CD4-positive, alpha-beta memory T cell (primary cell): ENCODE measurements at regions of chr5 and their contacts with region 1.

Region 1: DNA sequence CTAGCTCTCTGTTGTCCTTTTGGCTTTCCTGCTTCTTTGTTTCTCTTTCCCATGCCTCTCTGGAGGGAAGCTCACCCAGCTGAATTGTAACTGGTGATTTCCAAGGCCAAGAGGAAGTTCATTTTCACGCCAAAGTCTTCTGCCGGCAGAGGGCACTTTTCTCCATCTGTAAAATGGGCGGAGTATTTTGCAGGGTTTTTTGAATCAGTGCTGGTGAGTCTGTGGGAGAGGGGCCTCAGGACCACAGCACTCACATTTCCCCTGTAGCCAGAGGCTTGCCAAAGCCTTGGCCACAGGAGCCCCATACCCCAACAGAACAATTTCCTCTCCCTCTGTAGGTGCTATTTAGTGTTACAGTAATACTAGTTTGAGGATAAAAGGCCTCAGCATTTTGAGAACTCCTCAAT is 42.3 kb upstream of the MATR3 start:
- DNase-seq: peak in 4 of 5 donors; percentile 24 to 38 (median 36)
- H3K4me3 ChIP-seq: no peak overlapping the region
- H3K4me3 Mint-ChIP-seq: no peak overlapping the region
- H3K27ac ChIP-seq: no peak overlapping the region
- H3K27ac Mint-ChIP-seq: no peak overlapping the region
- H3K4me1 ChIP-seq: no peaks in the 10 kb centered on the region
- H3K4me1 Mint-ChIP-seq: peaks cover 6 to 9% (median 8%) of the 10 kb centered on the region in 4 donors
- H3K27me3 ChIP-seq: no peaks in the 10 kb centered on the region
- H3K27me3 Mint-ChIP-seq: no peaks in the 10 kb centered on the region

Region 2: DNA sequence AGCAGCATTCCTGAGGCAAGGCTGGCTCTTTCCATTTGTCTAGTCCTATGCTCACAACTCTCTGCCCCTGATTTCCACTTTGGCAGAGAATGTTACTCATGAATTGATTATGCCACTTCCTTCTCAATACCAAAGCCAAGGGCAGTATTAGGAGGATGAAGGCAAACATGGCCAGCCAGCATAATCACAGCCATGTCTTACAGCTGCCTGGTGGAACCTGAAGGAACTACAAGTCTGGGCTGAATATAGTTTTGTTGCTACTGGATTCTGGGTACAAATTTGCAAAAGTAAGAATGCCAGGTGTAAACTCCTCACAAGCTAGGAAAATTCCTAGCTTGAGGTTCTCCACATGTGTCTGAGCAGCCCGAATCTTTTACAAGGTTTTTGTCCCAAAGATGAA is 57.4 kb before region 1 on chr5:
- CTCF ChIA-PET with region 1: no interaction called
- POLR2A ChIA-PET with region 1: no interaction called
- intact Hi-C with region 1: no loop called
- DNase-seq: no peak
- H3K4me3 ChIP-seq: no peak overlapping the region
- H3K4me3 Mint-ChIP-seq: no peak overlapping the region
- H3K27ac ChIP-seq: no peak overlapping the region
- H3K27ac Mint-ChIP-seq: peak overlapping the region in 4 of 7 donors; percentile 2 to 64 (median 28)
- H3K4me1 ChIP-seq: peaks cover 13% of the 10 kb centered on the region
- H3K4me1 Mint-ChIP-seq: peaks cover 17 to 33% (median 24%) of the 10 kb centered on the region in 4 donors
- H3K27me3 ChIP-seq: no peaks in the 10 kb centered on the region
- H3K27me3 Mint-ChIP-seq: no peaks in the 10 kb centered on the region

Region 3: GRCh38 chr5:139232147-139232724 is 19.0 kb before region 1 on chr5:
- CTCF ChIA-PET with region 1: interaction called, 10 read pairs
- POLR2A ChIA-PET with region 1: no interaction called
- intact Hi-C with region 1: no loop called
- DNase-seq: no peak
- H3K4me3 ChIP-seq: no peak overlapping the region
- H3K4me3 Mint-ChIP-seq: no peak overlapping the region
- H3K27ac ChIP-seq: no peak overlapping the region
- H3K27ac Mint-ChIP-seq: no peak overlapping the region
- H3K4me1 ChIP-seq: no peaks in the 10 kb centered on the region
- H3K4me1 Mint-ChIP-seq: no peaks in the 10 kb centered on the region
- H3K27me3 ChIP-seq: no peaks in the 10 kb centered on the region
- H3K27me3 Mint-ChIP-seq: no peaks in the 10 kb centered on the region

Region 4: DNA sequence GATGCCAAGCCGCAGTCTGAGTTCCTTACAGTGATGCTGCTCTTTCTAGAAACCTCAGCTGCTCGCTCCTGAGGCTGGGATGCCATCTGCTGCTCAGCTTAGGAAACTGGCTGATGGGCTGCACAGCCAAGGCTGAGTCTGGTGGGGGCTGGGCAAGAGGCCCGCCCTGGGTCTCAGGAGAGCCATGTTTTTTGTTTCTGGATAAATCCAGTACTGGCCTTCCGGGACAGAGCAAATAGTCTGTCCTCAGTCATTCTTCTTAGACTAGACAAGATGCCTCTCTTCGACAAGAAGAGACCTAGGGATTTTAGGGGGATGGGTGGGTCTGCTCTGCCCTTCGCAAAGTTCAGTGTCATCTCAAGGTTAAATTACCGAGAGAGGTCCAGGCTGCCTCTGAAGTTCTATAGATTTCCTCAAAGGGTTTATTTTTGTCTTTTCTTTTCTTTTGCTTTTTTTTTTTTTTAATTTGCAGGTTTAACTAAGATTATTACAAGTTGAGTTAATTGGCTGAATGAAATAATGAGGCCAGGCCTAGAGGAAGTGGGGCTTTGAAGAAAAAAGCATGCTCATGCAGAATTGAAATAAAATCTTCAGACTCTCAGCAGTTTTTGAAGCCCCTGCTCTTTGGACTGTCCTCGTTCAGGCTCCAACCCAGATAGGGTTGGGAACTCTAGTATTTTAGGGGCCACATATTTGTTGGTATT is 11.6 kb after region 1 on chr5:
- CTCF ChIA-PET with region 1: interaction called, 13 read pairs
- POLR2A ChIA-PET with region 1: no interaction called
- intact Hi-C with region 1: no loop called
- DNase-seq: peak; percentile 46 to 62 (median 53)
- H3K4me3 ChIP-seq: no peak overlapping the region
- H3K4me3 Mint-ChIP-seq: no peak overlapping the region
- H3K27ac ChIP-seq: no peak overlapping the region
- H3K27ac Mint-ChIP-seq: peak overlapping the region in 3 of 7 donors; percentile 19 to 46 (median 30)
- H3K4me1 ChIP-seq: no peaks in the 10 kb centered on the region
- H3K4me1 Mint-ChIP-seq: peaks cover 1 to 5% (median 1%) of the 10 kb centered on the region in 4 donors
- H3K27me3 ChIP-seq: no peaks in the 10 kb centered on the region
- H3K27me3 Mint-ChIP-seq: peaks cover 2 to 5% of the 10 kb centered on the region in 2 donors

Region 5: DNA sequence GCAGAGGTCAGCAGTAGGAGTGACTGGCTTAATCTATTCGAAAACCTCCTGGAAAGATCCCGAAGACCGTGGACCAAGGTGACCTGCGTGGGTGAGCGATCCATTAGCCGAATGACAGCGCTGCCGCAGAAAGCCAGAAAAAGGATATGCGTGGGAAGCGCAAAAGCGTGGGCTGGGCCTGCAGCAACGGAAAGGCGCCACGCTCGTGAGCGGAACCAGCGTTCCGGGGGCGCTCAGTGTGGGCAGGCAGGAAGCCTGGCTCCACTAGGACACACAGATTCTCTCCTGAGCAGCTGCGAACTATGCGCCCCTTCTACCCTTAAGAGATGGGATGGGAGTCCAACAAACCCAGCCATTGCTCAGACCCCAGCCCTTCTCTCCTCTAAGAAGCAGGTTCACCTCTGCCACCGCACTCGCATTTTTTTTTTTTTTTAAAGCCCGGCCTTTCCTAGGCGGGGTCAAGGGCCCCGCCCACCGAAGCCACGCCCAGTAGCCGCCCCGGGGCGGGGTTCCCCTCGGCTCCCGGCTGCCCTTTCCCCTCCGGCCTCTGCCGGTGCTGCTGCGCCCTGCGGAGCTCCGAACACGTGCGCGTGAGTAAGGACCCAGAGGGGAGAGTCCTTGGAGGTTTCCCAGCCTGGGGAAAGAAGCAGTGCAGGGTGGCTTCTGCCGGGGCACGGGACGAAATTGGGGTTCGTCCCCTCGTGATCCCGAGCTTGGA is 22.4 kb after region 1 on chr5:
- CTCF ChIA-PET with region 1: interaction called, 13 read pairs
- POLR2A ChIA-PET with region 1: interaction called, 3 read pairs
- intact Hi-C with region 1: no loop called
- DNase-seq: peak; percentile 82 to 91 (median 86)
- H3K4me3 ChIP-seq: peak overlapping the region; percentile 14 to 65
- H3K4me3 Mint-ChIP-seq: peak overlapping the region; percentile 85 to 91 (median 87)
- H3K27ac ChIP-seq: peak overlapping the region; percentile 58
- H3K27ac Mint-ChIP-seq: peak overlapping the region; percentile 74 to 94 (median 90)
- H3K4me1 ChIP-seq: peaks cover 55% of the 10 kb centered on the region
- H3K4me1 Mint-ChIP-seq: peaks cover 29 to 55% (median 38%) of the 10 kb centered on the region in 4 donors
- H3K27me3 ChIP-seq: no peaks in the 10 kb centered on the region
- H3K27me3 Mint-ChIP-seq: no peaks in the 10 kb centered on the region

Region 6: DNA sequence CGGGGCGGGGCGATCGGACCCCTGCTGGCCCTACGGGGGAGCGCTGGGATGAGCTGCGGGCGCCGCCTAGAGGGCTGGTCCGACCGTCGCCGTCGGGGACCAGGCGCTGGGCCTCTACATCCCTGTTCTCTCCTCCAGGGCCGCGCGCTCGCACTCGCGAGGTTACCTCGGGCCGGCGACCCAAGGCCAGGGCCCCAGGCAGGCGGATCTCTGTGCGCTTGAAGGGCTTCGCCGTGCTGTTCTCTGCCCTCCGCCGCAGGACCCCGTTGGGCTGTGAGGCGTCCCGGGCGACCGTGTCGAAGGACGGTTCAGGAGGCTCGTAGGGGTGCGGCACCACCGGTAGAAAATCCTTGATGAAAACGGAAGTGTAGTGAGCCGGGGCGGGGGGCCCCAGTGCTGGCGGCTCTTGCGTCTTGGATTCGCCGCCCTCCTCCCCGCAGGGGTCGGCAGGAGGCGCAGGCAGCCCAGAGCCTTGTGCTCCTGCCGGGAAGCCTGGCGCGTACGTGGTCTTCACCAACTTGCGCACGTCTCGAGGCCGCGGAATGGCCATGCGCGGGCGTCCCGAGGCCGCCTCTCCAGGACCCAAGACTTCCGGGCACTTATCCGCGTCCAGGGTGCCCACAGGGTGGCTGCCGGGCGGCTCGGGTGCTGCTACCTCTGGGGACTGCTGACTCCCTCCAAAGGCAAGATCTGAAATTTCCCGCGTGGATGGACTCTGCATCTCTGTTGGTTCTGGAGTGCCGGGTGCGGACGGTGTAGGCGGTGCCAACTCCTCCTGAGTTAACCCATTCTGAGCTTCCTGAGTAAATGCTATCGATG is 141.6 kb after region 1 on chr5:
- CTCF ChIA-PET with region 1: interaction called, 7 read pairs
- POLR2A ChIA-PET with region 1: no interaction called
- intact Hi-C with region 1: loop called (anchors 1 kb)
- DNase-seq: peak; percentile 69 to 81 (median 73)
- H3K4me3 ChIP-seq: peak overlapping the region; percentile 61 to 69
- H3K4me3 Mint-ChIP-seq: peak overlapping the region; percentile 88 to 94 (median 88)
- H3K27ac ChIP-seq: peak overlapping the region; percentile 39
- H3K27ac Mint-ChIP-seq: peak overlapping the region; percentile 57 to 93 (median 85)
- H3K4me1 ChIP-seq: peaks cover 42% of the 10 kb centered on the region
- H3K4me1 Mint-ChIP-seq: peaks cover 22 to 43% (median 30%) of the 10 kb centered on the region in 4 donors
- H3K27me3 ChIP-seq: no peaks in the 10 kb centered on the region
- H3K27me3 Mint-ChIP-seq: no peaks in the 10 kb centered on the region